ENCODE measurements at regions of chr18 and their contacts with region 1.

Region 1: DNA sequence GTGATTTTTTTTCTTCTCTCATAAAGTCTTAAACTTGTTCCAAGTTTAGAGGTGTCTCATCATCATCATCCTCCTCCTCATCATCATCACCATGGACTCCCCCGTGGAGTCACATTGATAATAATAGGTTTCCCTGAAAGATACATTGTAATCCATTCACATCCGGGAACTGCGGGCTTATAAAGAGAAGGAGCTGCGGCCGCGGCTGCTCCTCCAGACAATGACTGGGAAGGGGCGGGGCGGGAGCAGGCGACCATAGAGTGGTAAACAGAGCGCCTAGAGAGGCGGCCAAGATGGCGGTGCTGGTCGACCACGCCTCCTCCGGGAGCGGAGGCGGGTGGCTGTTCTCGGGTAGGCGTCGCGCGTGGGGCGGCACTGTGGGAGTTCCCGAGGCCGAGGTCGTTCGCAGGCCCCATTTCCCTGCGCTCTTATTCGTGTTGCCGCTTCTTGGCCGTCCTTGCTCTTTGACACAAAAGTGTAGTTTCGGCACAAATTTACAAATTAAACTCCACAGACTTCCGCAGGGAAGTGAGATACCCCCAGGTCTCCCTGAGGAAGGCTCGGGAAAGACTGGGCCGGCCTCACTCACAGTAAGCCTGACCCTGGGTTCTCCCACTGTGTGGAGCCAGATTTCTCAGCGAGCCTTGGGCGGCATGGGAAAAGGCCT is 1.8 kb upstream of the TCF4 start:
- DNase-seq: peak; percentile 97 to 98 (median 98)
- ATAC-seq: peak; percentile 96 to 99 (median 98)
- H3K4me3 ChIP-seq: peak overlapping the region; percentile 63 to 82 (median 74)
- H3K27ac ChIP-seq: peak overlapping the region; percentile 80 to 92 (median 87)
- H3K4me1 ChIP-seq: peaks cover 0 to 23% (median 6%) of the 10 kb centered on the region in 12 donors
- H3K27me3 ChIP-seq: no peaks in the 10 kb centered on the region
- CTCF ChIP-seq: peak in 5 of 12 donors; percentile 6 to 41 (median 25)
- POLR2A ChIP-seq: peak in 1 of 2 donors; percentile 57

Region 2: GRCh38 chr18:55234366-55235093 is 355.2 kb before region 1 on chr18:
- intact Hi-C with region 1: loop called in 5 of 10 experiments (anchors 2 to 10 kb)
- DNase-seq: peak; percentile 67 to 79 (median 75)
- ATAC-seq: peak; percentile 76 to 92 (median 88)
- H3K4me3 ChIP-seq: no peak overlapping the region
- H3K27ac ChIP-seq: peak overlapping the region in 11 of 12 donors; percentile 47 to 77 (median 62)
- H3K4me1 ChIP-seq: peaks cover 0 to 55% (median 37%) of the 10 kb centered on the region in 12 donors
- H3K27me3 ChIP-seq: no peaks in the 10 kb centered on the region
- CTCF ChIP-seq: peak; percentile 60 to 87 (median 79)
- POLR2A ChIP-seq: no peak

Region 3: GRCh38 chr18:55337908-55338521 is 251.7 kb before region 1 on chr18:
- intact Hi-C with region 1: loop called in 5 of 10 experiments (anchors 5 to 10 kb)
- DNase-seq: peak; percentile 33 to 60 (median 44)
- ATAC-seq: peak; percentile 43 to 87 (median 82)
- H3K4me3 ChIP-seq: peak overlapping the region in 8 of 12 donors; percentile 5 to 41 (median 33)
- H3K27ac ChIP-seq: peak overlapping the region; percentile 24 to 90 (median 84)
- H3K4me1 ChIP-seq: peaks cover 4 to 71% (median 37%) of the 10 kb centered on the region in 12 donors
- H3K27me3 ChIP-seq: no peaks in the 10 kb centered on the region
- CTCF ChIP-seq: no peak
- POLR2A ChIP-seq: peak in 1 of 2 donors; percentile 43

Region 4: DNA sequence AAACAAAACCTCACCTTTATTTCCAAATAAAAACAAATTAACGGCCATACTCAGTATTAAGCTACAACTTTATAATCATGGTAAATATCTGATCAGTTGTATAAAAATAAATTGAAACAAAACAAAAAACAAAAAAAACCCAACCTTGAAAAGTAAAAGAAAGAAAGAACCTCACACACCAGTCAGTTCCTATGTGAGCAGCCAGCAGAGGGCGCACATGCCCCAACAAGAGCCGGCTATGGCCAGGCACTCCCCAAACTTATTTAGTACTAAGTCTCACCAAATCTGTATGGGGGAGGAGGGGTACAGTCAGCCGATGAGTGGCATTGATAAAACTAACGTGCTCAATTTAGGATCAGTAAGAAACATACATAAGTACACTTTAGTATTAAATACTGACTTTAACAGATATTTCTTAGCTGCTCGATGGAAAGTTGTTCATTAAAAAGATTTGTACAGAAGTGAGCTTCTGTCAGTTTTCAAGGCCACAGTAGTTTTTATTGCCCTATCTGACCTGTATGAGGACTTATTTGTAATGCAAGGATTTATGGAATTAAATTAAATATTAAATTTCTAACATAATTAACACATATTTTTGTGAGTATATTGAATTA is 174.4 kb before region 1 on chr18:
- intact Hi-C with region 1: loop called in 9 of 10 experiments (anchors 2 to 10 kb)
- DNase-seq: peak; percentile 85 to 92 (median 88)
- ATAC-seq: peak; percentile 85 to 93 (median 88)
- H3K4me3 ChIP-seq: no peak overlapping the region
- H3K27ac ChIP-seq: peak overlapping the region in 7 of 12 donors; percentile 1 to 58 (median 21)
- H3K4me1 ChIP-seq: peaks cover 0 to 67% (median 27%) of the 10 kb centered on the region in 12 donors
- H3K27me3 ChIP-seq: no peaks in the 10 kb centered on the region
- CTCF ChIP-seq: peak; percentile 83 to 97 (median 94)
- POLR2A ChIP-seq: no peak

Region 5: DNA sequence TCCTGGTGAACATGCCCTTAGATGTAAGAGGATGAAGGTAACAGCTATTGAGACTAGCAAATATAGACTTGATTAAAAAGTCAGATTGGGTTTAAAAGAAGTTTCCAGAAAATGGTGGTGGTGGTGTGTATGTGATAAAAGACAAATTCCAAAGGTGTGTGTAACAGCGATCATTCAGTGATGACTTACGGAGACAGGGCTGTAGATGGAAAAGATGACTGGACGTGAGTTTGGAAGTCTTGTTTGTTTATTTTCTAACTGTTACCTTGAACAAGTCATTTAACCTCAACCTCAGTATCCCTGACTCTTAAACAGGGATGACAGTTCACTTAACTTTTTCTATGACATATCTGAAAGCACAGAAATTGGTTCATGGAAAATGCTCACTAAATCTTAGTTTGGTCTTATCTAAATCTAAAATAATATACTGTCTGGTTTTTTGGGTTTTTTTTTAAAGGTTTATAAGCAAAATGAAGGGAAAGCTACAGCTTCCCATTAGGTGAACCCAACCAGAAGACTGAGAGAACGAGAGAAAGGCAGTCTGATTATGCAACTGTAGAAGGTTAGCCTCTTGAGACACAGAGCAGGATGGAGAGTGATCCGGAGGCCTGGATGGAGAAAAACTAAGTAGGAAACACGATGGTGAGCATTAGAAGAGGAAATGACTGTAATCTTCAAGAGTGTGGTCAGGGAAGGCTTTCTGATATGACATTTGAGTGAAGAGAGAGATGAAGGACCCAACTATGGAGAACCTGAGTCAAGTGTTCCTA is 73.6 kb before region 1 on chr18:
- intact Hi-C with region 1: loop called in 8 of 10 experiments (anchors 2 to 10 kb)
- DNase-seq: no peak
- ATAC-seq: peak in 2 of 4 donors; percentile 50 to 61
- H3K4me3 ChIP-seq: no peak overlapping the region
- H3K27ac ChIP-seq: peak overlapping the region in 8 of 12 donors; percentile 7 to 51 (median 18)
- H3K4me1 ChIP-seq: peaks cover 0 to 42% (median 16%) of the 10 kb centered on the region in 12 donors
- H3K27me3 ChIP-seq: no peaks in the 10 kb centered on the region
- CTCF ChIP-seq: no peak
- POLR2A ChIP-seq: no peak

Region 6: DNA sequence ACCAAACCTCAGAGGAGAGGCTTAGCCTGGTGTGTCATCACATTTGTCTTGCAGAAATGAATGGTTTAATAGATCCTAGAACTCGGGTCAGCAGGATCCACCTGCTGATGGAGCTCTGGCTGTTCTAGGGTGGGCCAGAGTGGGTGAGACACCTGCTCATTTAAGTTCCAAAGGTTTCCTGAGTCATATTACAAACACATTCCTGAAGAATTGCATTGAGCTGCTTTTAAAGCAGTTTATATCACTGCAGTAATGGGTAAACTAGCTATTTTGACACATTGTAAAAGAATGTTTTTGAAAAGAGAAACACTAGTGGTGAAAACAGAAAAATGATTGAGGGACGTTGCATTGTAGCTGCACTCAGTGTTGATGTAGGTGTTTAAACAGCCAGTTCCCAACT is 173.5 kb after region 1 on chr18:
- intact Hi-C with region 1: loop called in 1 of 10 experiments (anchors 10 kb)
- DNase-seq: no peak
- ATAC-seq: no peak
- H3K4me3 ChIP-seq: no peak overlapping the region
- H3K27ac ChIP-seq: no peak overlapping the region
- H3K4me1 ChIP-seq: no peaks in the 10 kb centered on the region
- H3K27me3 ChIP-seq: no peaks in the 10 kb centered on the region
- CTCF ChIP-seq: no peak
- POLR2A ChIP-seq: no peak

Region 7: DNA sequence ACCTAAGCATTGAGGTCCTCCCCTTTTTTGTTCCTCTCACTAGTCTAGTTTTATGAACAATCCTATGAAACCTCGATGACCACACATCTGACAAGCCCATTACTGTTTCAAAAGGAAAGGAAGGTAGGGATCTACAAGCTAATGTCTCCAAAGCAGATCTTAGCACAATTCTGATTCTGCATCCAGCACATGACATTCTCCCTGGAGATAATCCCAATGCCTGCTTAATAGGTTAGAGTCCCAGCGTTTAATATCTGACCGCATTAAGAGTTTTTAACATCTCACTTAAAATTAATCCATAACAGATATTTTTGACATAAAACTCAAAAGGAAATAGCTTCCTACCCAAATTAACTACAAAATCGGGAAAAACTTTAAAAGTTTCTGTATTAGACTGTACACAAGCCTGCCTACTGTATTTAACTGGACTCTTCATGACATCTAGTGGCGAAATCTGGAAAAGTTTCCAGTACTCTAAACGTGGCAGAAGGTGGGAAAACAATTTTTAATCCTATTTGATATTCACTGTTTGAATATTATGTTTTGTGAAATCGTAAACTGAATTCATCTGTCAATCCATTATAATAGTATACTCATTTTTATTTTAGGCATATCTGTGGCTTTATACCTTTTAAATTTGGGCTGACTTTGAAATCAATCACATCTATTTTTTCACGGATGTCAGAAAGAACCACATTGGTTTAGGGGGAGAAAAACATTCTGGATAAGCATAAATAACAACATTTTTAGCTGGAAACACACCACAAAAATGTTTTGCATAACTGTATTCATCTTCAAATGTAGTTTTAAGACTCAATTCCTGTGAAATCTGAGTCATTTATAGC is 986.3 kb after region 1 on chr18:
- intact Hi-C with region 1: loop called in 4 of 10 experiments (anchors 5 kb)
- DNase-seq: peak in 1 of 5 donors; percentile 45
- ATAC-seq: peak; percentile 72 to 90 (median 80)
- H3K4me3 ChIP-seq: peak overlapping the region in 2 of 12 donors; percentile 6 to 26
- H3K27ac ChIP-seq: peak overlapping the region in 11 of 12 donors; percentile 39 to 84 (median 73)
- H3K4me1 ChIP-seq: peaks cover 10 to 38% (median 29%) of the 10 kb centered on the region in 12 donors
- H3K27me3 ChIP-seq: no peaks in the 10 kb centered on the region
- CTCF ChIP-seq: peak; percentile 55 to 88 (median 77)
- POLR2A ChIP-seq: no peak